ENCODE measurements at regions of chr12 and their contacts with region 1.

Region 1: DNA sequence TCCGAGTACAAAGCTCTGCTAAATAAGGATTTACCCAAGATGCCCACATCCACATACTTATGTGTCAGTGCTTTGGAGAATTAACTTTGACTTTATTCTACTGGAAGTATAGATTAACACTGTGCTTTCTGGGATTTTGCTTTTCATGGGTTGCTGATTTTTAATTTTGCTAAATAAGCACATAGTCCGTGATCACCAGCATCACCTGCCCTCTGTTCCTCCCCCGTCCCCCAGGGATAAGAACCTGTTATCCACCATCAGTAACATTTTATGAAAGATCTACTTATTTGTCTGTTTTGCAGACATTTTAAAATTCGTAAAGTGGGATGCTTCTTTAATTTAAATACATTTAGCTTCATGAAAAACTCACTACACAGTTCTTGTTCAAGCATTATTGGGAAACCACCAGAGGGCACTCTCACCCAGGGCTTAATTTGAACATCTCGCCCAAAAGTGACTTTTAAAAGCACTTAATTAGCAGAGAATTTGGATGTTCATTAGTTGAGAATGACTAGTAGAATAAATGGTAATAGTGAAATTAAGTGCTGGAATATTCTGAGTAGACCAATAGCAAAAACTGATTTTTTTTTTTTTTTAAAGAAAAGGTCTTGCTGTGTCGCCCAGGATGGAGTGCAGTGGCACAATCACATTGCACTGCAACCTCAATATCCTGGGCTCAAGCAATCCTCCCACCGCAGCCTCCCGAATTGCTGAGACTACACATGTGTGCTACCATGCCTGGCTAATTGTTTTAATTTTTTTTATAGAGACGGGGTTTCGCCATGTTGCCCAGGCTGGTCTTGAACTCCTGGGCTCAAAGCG is 35.7 kb downstream of the MRPL42 start:
- DNase-seq: peak; percentile 21
- ATAC-seq: no peak
- H3K4me3 ChIP-seq: no peak overlapping the region
- H3K27ac ChIP-seq: no peak overlapping the region
- H3K4me1 ChIP-seq: 0 out of 4 replicates have a peak, but pooled peaks cover 0 to 4% of the 10 kb centered on the region in 2 experiments
- H3K27me3 ChIP-seq: no peaks in the 10 kb centered on the region
- CTCF ChIP-seq: peak; percentile 71 to 88 (median 76); a peak in 5 of 6 replicates
- POLR2A ChIP-seq: no peak
- RAD21 ChIP-seq: peak; percentile 78

Region 2: GRCh38 chr12:93476555-93476954 is 26.5 kb before region 1 on chr12:
- CTCF ChIA-PET with region 1: no interaction called
- POLR2A ChIA-PET with region 1: no interaction called
- RAD21 ChIA-PET with region 1: no interaction called
- intact Hi-C with region 1: no loop called
- DNase-seq: no peak
- ATAC-seq: no peak
- H3K4me3 ChIP-seq: no peak overlapping the region
- H3K27ac ChIP-seq: no peak overlapping the region
- H3K4me1 ChIP-seq: no peaks in the 10 kb centered on the region
- H3K27me3 ChIP-seq: no peaks in the 10 kb centered on the region
- CTCF ChIP-seq: no peak
- POLR2A ChIP-seq: no peak
- RAD21 ChIP-seq: no peak

Region 3: GRCh38 chr12:93563807-93564538 is 61.0 kb after region 1 on chr12:
- CTCF ChIA-PET with region 1: interaction called, 7 read pairs
- POLR2A ChIA-PET with region 1: no interaction called
- RAD21 ChIA-PET with region 1: interaction called in 1 of 2 experiments, 3 read pairs
- intact Hi-C with region 1: loop called (anchors 5 kb)
- DNase-seq: peak; percentile 59
- ATAC-seq: peak; percentile 98
- H3K4me3 ChIP-seq: no peak overlapping the region
- H3K27ac ChIP-seq: peak overlapping the region; percentile 32; the same call in 1 of the 2 replicates
- H3K4me1 ChIP-seq: peaks cover 17 to 19% of the 10 kb centered on the region in 2 experiments
- H3K27me3 ChIP-seq: no peaks in the 10 kb centered on the region
- CTCF ChIP-seq: peak; percentile 10 to 44 (median 33); a peak in 4 of 6 replicates
- POLR2A ChIP-seq: no peak
- RAD21 ChIP-seq: peak; percentile 48

Region 4: DNA sequence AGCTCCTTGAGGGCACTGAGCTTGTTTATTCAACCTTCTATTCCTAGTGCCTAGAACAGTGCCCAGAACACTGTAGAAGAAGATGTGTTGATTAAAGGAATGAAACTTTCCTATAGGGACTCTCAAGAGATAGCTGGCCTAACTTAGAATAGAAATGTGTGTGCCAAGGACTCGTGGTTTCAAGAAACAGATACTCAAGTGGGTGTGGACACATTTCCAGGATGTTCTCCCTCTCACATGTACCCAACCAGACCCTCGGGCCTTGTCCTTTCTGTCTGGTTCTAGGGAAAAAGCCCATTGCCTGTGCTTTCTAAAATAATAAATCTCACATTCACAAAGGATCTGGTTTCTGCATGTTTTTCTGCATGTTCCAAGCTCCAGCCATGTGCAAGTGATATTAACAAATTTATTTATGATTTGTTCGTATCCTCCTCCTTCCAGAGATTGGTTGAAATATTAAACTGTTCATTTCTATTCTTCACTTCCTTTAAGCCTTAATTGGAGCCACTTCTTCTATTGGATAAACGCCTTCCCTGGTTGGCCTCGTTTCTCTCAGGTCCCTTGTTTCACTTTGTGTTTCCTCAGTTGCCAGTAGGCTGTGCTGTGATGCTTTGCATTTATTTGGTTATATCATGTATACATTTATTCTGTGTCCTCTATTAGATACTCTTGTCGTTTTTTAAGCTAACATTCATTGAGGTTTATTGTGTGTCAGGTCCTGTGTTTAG is 263.9 kb after region 1 on chr12:
- CTCF ChIA-PET with region 1: no interaction called
- POLR2A ChIA-PET with region 1: no interaction called
- RAD21 ChIA-PET with region 1: no interaction called
- intact Hi-C with region 1: loop called (anchors 5 kb)
- DNase-seq: no peak
- ATAC-seq: peak; percentile 71
- H3K4me3 ChIP-seq: no peak overlapping the region
- H3K27ac ChIP-seq: no peak overlapping the region
- H3K4me1 ChIP-seq: peaks cover 0 to 8% of the 10 kb centered on the region in 2 experiments; a peak in 1 of 4 replicates
- H3K27me3 ChIP-seq: no peaks in the 10 kb centered on the region
- CTCF ChIP-seq: peak; percentile 42 to 63 (median 53); a peak in 5 of 6 replicates
- POLR2A ChIP-seq: no peak
- RAD21 ChIP-seq: peak; percentile 78

Region 5: GRCh38 chr12:93979189-93979588 is 476.2 kb after region 1 on chr12:
- CTCF ChIA-PET with region 1: interaction called, 5 read pairs
- POLR2A ChIA-PET with region 1: no interaction called
- RAD21 ChIA-PET with region 1: interaction called in 1 of 2 experiments, 3 read pairs
- intact Hi-C with region 1: loop called (anchors 2 kb)
- DNase-seq: peak; percentile 28
- ATAC-seq: peak; percentile 65
- H3K4me3 ChIP-seq: no peak overlapping the region
- H3K27ac ChIP-seq: no peak overlapping the region
- H3K4me1 ChIP-seq: no peaks in the 10 kb centered on the region
- H3K27me3 ChIP-seq: no peaks in the 10 kb centered on the region
- CTCF ChIP-seq: peak; percentile 47 to 68 (median 61)
- POLR2A ChIP-seq: no peak
- RAD21 ChIP-seq: peak; percentile 88

Region 6: DNA sequence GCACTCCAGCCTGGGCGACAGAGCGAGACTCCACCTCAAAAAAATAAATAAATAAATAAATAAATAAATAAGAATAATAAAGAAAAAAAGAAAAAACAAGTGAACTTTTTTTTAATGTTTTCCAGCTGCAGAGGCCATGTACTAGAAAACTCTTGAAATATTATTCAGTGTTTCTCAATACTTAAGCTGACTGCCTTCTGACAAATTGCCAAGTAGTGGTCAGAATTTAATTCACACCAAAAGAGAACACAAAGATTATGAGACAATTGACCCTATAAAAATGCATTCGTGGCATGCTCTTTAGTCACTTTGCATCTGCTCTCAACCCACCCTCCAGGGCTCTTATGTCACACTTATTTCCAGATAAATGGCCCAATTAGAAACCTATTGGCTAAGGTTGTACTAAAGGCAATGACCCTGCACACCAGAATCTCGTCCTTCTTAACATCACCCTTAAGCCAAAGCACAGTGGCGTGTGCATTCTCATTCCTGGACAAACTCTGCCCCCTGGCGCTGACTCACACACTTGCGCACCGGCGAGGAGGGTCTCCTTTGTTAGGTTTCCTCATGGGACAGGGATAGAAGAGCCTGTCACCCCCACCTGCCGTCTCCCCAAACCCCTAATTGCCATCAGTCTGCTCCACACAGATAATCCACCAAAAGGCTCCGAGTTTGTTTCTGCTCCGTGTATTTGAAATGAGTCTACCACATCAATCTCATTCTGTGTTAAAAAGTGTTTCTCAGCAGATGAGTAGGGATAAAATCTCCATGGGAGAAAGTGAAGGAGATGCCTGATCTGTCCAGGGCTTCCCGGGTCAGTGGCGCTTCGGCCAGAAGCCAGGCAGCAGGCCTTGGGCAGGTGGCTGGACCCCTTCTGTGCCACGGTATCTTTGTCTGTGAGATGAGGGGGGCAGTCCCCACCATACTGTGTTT is 1029.7 kb after region 1 on chr12:
- CTCF ChIA-PET with region 1: no interaction called
- POLR2A ChIA-PET with region 1: no interaction called
- RAD21 ChIA-PET with region 1: no interaction called
- intact Hi-C with region 1: loop called (anchors 10 kb)
- DNase-seq: peak; percentile 50
- ATAC-seq: peak; percentile 97
- H3K4me3 ChIP-seq: no peak overlapping the region
- H3K27ac ChIP-seq: no peak overlapping the region
- H3K4me1 ChIP-seq: peaks cover 0 to 3% of the 10 kb centered on the region in 2 experiments; a peak in 1 of 4 replicates
- H3K27me3 ChIP-seq: no peaks in the 10 kb centered on the region
- CTCF ChIP-seq: peak; percentile 83 to 94 (median 89)
- POLR2A ChIP-seq: no peak
- RAD21 ChIP-seq: peak; percentile 98